CD8-positive, alpha-beta T cell (primary cell): ENCODE measurements at regions of chr15 and their contacts with region 1.

Region 1: DNA sequence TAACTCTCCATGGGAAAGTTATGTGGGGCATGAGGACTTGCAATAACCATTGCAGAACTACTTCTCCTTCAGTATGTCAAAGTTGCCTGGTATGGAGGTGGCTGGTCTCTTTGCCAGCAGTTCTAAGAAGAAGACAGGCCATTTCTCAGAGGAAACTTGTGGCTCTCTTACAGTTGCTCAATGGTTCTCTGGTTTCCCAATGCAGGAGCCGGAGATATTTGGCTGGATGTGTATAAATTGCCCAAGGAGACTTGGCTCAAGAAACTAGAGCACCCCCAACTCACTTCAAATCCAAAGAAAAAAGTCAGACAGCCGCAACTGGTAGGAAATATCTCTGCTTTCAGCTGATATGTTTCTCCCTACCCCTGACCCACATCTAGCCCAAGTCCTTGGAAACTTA is 24.2 kb downstream of the WDR93 start:
- DNase-seq: no peak
- ATAC-seq: no peak
- H3K4me3 ChIP-seq: no peak overlapping the region
- H3K4me3 Mint-ChIP-seq: no peak overlapping the region
- H3K27ac ChIP-seq: no peak overlapping the region
- H3K27ac Mint-ChIP-seq: no peak overlapping the region
- H3K4me1 ChIP-seq: no peaks in the 10 kb centered on the region
- H3K4me1 Mint-ChIP-seq: no peaks in the 10 kb centered on the region
- H3K27me3 ChIP-seq: no peaks in the 10 kb centered on the region
- H3K27me3 Mint-ChIP-seq: peaks cover 5% of the 10 kb centered on the region
- CTCF ChIP-seq: no peak

Region 2: GRCh38 chr15:89728254-89728653 is 13.5 kb after region 1 on chr15:
- CTCF ChIA-PET with region 1: no interaction called
- POLR2A ChIA-PET with region 1: no interaction called
- intact Hi-C with region 1: loop called in 1 of 2 experiments (anchors 1 kb)
- DNase-seq: no peak
- ATAC-seq: no peak
- H3K4me3 ChIP-seq: no peak overlapping the region
- H3K4me3 Mint-ChIP-seq: no peak overlapping the region
- H3K27ac ChIP-seq: no peak overlapping the region
- H3K27ac Mint-ChIP-seq: no peak overlapping the region
- H3K4me1 ChIP-seq: no peaks in the 10 kb centered on the region
- H3K4me1 Mint-ChIP-seq: no peaks in the 10 kb centered on the region
- H3K27me3 ChIP-seq: no peaks in the 10 kb centered on the region
- H3K27me3 Mint-ChIP-seq: peaks cover 12% of the 10 kb centered on the region
- CTCF ChIP-seq: no peak

Region 3: GRCh38 chr15:90154861-90155626 is 440.3 kb after region 1 on chr15:
- CTCF ChIA-PET with region 1: no interaction called
- POLR2A ChIA-PET with region 1: no interaction called
- intact Hi-C with region 1: no loop called
- DNase-seq: no peak
- ATAC-seq: no peak
- H3K4me3 ChIP-seq: no peak overlapping the region
- H3K4me3 Mint-ChIP-seq: no peak overlapping the region
- H3K27ac ChIP-seq: no peak overlapping the region
- H3K27ac Mint-ChIP-seq: no peak overlapping the region
- H3K4me1 ChIP-seq: no peaks in the 10 kb centered on the region
- H3K4me1 Mint-ChIP-seq: peaks cover 3% of the 10 kb centered on the region
- H3K27me3 ChIP-seq: no peaks in the 10 kb centered on the region
- H3K27me3 Mint-ChIP-seq: no peaks in the 10 kb centered on the region
- CTCF ChIP-seq: no peak